ENCODE measurements at regions of chr6 and their contacts with region 1.

Region 1: GRCh38 chr6:79949233-79949632 is 1.9 kb upstream of the ELOVL4 start:
- DNase-seq: no peak
- H3K4me3 ChIP-seq: no peak overlapping the region
- H3K27ac ChIP-seq: no peak overlapping the region
- H3K4me1 ChIP-seq: peaks cover 16 to 29% (median 23%) of the 10 kb centered on the region in 4 donors
- H3K27me3 ChIP-seq: peaks cover 0 to 4% (median 0%) of the 10 kb centered on the region in 4 donors
- CTCF ChIP-seq: peak in 2 of 3 experiments; percentile 35 to 59
- EP300 ChIP-seq: no peak
- POLR2A ChIP-seq: no peak

Region 2: GRCh38 chr6:79902046-79902445 is 47.2 kb before region 1 on chr6:
- intact Hi-C with region 1: no loop called
- DNase-seq: no peak
- H3K4me3 ChIP-seq: no peak overlapping the region
- H3K27ac ChIP-seq: no peak overlapping the region
- H3K4me1 ChIP-seq: no peaks in the 10 kb centered on the region
- H3K27me3 ChIP-seq: no peaks in the 10 kb centered on the region
- CTCF ChIP-seq: no peak
- EP300 ChIP-seq: no peak
- POLR2A ChIP-seq: no peak

Region 3: DNA sequence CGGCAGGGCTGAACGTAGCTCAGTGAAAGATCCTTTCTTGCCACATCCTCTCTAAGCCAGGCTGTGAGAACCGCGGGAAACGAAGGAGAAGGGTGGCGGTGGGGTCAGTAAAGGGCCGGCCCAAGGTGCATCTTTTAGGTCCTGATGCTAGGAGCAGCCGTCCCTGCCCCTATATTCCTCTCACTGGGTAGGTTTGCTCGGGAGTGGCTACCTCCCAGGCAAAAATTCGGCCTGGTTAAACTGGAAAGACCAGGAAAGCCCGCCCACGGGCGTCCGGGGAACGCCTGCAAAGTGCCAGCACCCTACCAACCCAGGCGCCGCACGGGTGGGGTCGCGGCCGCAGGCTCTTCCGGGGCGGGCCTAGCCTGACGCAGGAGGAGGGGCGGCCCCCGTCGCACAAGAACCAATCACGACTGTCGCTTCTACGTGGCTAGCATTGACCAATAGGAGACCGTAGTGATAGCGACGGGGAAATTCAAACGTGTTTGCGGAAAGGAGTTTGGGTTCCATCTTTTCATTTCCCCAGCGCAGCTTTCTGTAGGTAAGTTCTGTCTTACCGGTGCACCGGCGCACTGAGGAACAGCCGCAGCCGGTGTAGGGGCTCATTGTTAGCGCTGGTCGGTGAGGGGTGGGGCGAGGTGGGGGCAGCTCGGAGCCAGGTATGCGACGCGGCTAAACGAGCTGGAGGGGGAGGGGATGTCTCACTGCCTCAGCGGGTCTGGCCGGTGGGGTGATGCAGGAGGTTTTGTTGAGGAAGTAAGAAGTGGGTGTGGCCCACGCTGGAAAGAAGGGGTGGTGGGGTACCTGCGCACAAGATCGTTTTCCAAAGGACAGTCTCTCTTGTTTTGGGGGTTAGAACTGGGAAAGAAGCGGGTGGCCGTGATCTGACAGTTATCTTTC is 55.2 kb after region 1 on chr6 and contains the start of gene TTK:
- intact Hi-C with region 1: loop called (anchors 2 kb)
- DNase-seq: peak; percentile 98
- H3K4me3 ChIP-seq: peak within 1 kb of the TSS; percentile 69 to 80 (median 72)
- H3K27ac ChIP-seq: peak within 1 kb of the TSS; percentile 84 to 90 (median 88)
- H3K4me1 ChIP-seq: peaks cover 10 to 16% (median 14%) of the 10 kb centered on the region in 4 donors
- H3K27me3 ChIP-seq: no peaks in the 10 kb centered on the region
- CTCF ChIP-seq: no peak
- EP300 ChIP-seq: no peak
- POLR2A ChIP-seq: no peak
- total RNA-seq, gene TTK: 0.83 to 1.6 TPM in 2 of 4 donors, not detected in the others

Region 4: GRCh38 chr6:80094017-80094416 is 144.8 kb after region 1 on chr6:
- intact Hi-C with region 1: loop called (anchors 5 kb)
- DNase-seq: no peak
- H3K4me3 ChIP-seq: no peak overlapping the region
- H3K27ac ChIP-seq: no peak overlapping the region
- H3K4me1 ChIP-seq: no peaks in the 10 kb centered on the region
- H3K27me3 ChIP-seq: no peaks in the 10 kb centered on the region
- CTCF ChIP-seq: peak; percentile 45 to 62 (median 55)
- EP300 ChIP-seq: no peak
- POLR2A ChIP-seq: no peak

Region 5: GRCh38 chr6:80106418-80107235 is 157.4 kb after region 1 on chr6 and contains the start of gene BCKDHB:
- intact Hi-C with region 1: loop called (anchors 5 kb)
- DNase-seq: peak; percentile 99
- H3K4me3 ChIP-seq: peak within 1 kb of the TSS; percentile 71 to 89 (median 84)
- H3K27ac ChIP-seq: peak within 1 kb of the TSS; percentile 89 to 97 (median 94)
- H3K4me1 ChIP-seq: peaks cover 6 to 17% (median 13%) of the 10 kb centered on the region in 4 donors
- H3K27me3 ChIP-seq: no peaks in the 10 kb centered on the region
- CTCF ChIP-seq: peak in 1 of 3 experiments; percentile 20
- EP300 ChIP-seq: no peak
- POLR2A ChIP-seq: peak; percentile 61
- total RNA-seq, gene BCKDHB: 12.2 to 26.2 (median 20.6) TPM

Region 6: GRCh38 chr6:80205404-80205803 is 256.2 kb after region 1 on chr6:
- intact Hi-C with region 1: no loop called
- DNase-seq: no peak
- H3K4me3 ChIP-seq: no peak overlapping the region
- H3K27ac ChIP-seq: no peak overlapping the region
- H3K4me1 ChIP-seq: peaks cover 0 to 4% (median 4%) of the 10 kb centered on the region in 4 donors
- H3K27me3 ChIP-seq: no peaks in the 10 kb centered on the region
- CTCF ChIP-seq: no peak
- EP300 ChIP-seq: no peak
- POLR2A ChIP-seq: no peak